Activated naive CD4-positive, alpha-beta T cell treated with anti-CD3 and anti-CD28 coated beads for 36 hours (primary cell): ENCODE measurements at regions of chr21 and their contacts with region 1.

Region 1: DNA sequence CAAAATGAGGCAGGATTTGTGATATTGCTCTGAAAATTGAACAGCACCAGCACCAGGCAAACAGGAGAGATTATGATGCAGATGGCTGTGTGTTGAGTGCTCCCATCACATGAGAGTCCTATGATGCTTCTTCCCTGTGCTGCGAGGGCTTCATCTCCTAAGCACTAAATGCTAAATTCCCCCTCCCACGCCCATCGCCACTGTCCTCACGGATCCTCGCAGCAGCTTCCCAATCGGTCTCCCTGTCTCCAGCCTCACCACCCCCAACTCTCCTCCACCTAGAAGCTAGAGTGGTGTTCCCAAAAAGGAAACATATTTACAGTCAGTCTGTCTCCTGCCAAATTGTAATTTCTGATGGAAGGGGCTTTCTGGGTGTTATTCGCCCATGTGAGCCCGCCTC is 4.9 kb upstream of the BACE2 start:
- DNase-seq: no peak
- H3K4me3 Mint-ChIP-seq: no peak overlapping the region
- H3K27ac Mint-ChIP-seq: no peak overlapping the region
- H3K4me1 Mint-ChIP-seq: peaks cover 2% of the 10 kb centered on the region
- H3K27me3 Mint-ChIP-seq: peaks cover 28% of the 10 kb centered on the region

Region 2: DNA sequence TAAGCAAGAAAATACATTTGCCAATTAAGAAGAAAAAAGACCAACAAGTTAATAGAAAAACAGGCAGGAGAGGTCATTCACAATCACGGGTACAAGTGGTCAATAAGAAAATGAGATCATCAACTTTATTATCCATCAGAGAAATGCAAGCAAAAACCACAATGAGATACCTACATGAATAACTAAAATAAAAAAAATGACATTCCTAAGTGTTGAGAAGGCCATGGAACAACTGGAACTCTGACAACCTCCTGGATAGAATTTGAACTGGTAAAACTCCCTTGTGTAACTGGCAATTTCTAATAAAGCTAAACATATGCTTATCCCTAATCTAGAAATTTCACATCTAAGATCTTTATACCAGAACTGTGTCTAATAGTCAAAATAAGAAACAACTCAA is 130.6 kb before region 1 on chr21:
- CTCF ChIA-PET with region 1: no interaction called
- intact Hi-C with region 1: no loop called
- DNase-seq: no peak
- H3K4me3 Mint-ChIP-seq: no peak overlapping the region
- H3K27ac Mint-ChIP-seq: no peak overlapping the region
- H3K4me1 Mint-ChIP-seq: no peaks in the 10 kb centered on the region
- H3K27me3 Mint-ChIP-seq: peaks cover 33% of the 10 kb centered on the region

Region 3: DNA sequence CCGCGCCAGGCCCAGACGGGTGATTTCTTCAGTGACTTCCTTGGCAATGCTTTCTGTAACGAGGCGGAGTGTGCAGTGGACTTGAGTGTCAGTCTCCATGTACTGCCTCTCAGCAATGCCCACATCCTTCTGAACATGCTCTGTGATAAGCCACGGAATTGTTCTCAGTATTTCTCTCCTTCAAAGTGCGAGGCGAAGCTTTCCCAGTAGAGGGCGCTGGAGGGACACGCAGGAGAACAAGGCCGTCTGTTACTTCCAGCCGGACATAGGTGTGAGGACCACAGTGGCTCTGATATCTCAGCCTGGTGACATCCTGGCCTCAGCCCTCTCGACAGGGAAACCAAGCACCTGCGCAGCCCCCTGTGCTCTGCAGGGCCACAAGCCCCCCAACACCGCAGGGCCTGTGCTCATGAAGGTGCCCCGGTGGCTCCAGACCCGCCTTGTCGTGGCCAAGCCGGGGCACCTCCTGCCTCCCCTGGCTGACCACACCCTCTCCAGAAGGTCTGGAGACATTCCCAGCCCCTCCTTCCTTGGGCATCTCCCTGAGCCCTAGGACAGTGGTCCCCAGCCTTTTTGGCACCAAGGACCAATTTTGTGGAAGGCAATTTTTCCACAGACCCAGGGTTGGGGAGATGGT is 41.2 kb before region 1 on chr21:
- CTCF ChIA-PET with region 1: no interaction called
- intact Hi-C with region 1: loop called (anchors 1 kb)
- DNase-seq: peak; percentile 83
- H3K4me3 Mint-ChIP-seq: no peak overlapping the region
- H3K27ac Mint-ChIP-seq: no peak overlapping the region
- H3K4me1 Mint-ChIP-seq: no peaks in the 10 kb centered on the region
- H3K27me3 Mint-ChIP-seq: peaks cover 14% of the 10 kb centered on the region